ENCODE measurements at regions of chr3 and their contacts with region 1.

Region 1: DNA sequence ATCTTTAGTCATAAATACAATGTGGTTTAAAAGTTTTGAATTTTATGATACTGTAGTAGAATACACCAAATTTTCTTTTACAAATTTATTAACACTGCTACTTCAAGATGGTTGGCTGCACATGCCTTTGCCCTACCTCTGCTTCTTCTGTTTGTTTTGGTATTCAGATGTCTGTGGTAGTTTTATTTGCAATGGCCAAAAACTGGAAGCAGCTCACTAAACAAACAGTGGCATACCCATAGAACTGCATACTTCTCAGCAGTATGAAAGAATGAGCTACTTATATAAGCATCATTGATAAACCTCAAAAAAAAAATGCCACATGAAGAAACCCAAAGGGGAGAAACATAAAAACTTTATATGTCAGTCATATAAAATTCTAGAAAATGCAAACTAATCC is 19.5 kb downstream of the ARIH2 start:
- DNase-seq: no peak
- H3K4me3 Mint-ChIP-seq: no peak overlapping the region
- H3K27ac Mint-ChIP-seq: no peak overlapping the region
- H3K4me1 Mint-ChIP-seq: peaks cover 4% of the 10 kb centered on the region
- H3K27me3 Mint-ChIP-seq: no peaks in the 10 kb centered on the region
- CTCF ChIP-seq: no peak

Region 2: GRCh38 chr3:48528754-48529153 is 409.4 kb before region 1 on chr3:
- CTCF ChIA-PET with region 1: no interaction called
- POLR2A ChIA-PET with region 1: no interaction called
- intact Hi-C with region 1: no loop called
- DNase-seq: peak; percentile 6
- H3K4me3 Mint-ChIP-seq: no peak overlapping the region
- H3K27ac Mint-ChIP-seq: no peak overlapping the region
- H3K4me1 Mint-ChIP-seq: peaks cover 5% of the 10 kb centered on the region
- H3K27me3 Mint-ChIP-seq: no peaks in the 10 kb centered on the region
- CTCF ChIP-seq: no peak

Region 3: GRCh38 chr3:48949376-48949717 is 11.2 kb after region 1 on chr3:
- CTCF ChIA-PET with region 1: interaction called, 4 read pairs
- POLR2A ChIA-PET with region 1: interaction called, 10 read pairs
- intact Hi-C with region 1: no loop called
- DNase-seq: no peak
- H3K4me3 Mint-ChIP-seq: no peak overlapping the region
- H3K27ac Mint-ChIP-seq: peak overlapping the region; percentile 25
- H3K4me1 Mint-ChIP-seq: peaks cover 10% of the 10 kb centered on the region
- H3K27me3 Mint-ChIP-seq: no peaks in the 10 kb centered on the region
- CTCF ChIP-seq: no peak

Region 4: DNA sequence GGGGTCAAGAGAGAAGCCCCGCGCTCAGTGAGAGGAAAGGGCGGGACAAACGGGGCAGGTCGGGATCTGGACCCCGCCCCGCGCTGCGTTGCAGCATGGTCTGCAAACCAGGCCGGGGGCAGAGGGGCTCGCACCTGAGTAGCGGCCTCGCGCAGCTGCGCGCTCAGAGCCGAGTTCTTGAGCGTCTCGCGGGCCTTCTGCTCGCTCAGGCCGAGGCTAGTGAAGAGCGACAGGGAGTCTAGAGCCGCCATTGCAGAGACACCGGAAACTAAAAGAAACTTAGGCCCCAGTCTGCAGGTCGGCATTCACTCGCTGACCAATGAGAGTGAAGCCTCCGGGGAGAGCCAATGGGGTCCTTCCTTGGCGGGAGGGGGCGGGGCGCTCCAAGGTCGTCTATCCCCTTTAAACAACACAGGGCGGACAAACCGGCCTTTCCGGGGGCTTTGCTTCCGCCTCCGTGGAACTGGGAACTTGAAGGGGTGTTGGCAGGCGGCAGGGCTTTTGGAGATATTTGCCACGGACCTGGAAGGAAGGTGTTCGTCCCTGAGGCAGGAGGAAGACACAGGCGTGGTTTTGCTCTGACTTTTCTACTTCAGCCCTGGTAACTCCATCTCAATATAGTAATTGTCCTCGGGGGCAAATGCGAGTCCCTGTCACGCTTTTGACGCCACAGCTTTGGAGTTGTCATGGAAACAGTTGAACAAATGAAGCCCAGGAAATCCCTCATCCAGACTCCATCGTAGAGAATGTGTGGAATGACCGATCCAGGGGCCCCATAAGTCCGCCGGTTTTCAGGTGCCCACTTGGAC is 166.5 kb after region 1 on chr3 and contains the start of gene QARS1:
- CTCF ChIA-PET with region 1: no interaction called
- POLR2A ChIA-PET with region 1: no interaction called
- intact Hi-C with region 1: no loop called
- DNase-seq: peak; percentile 93
- H3K4me3 Mint-ChIP-seq: peak within 1 kb of the TSS; percentile 98
- H3K27ac Mint-ChIP-seq: peak within 1 kb of the TSS; percentile 90
- H3K4me1 Mint-ChIP-seq: peaks cover 12% of the 10 kb centered on the region
- H3K27me3 Mint-ChIP-seq: no peaks in the 10 kb centered on the region
- CTCF ChIP-seq: no peak
- total RNA-seq, gene QARS1: 114 and 149 TPM in 2 replicates

Region 5: GRCh38 chr3:49255112-49255511 is 317.0 kb after region 1 on chr3:
- CTCF ChIA-PET with region 1: no interaction called
- POLR2A ChIA-PET with region 1: no interaction called
- intact Hi-C with region 1: no loop called
- DNase-seq: no peak
- H3K4me3 Mint-ChIP-seq: no peak overlapping the region
- H3K27ac Mint-ChIP-seq: peak overlapping the region; percentile 35
- H3K4me1 Mint-ChIP-seq: no peaks in the 10 kb centered on the region
- H3K27me3 Mint-ChIP-seq: no peaks in the 10 kb centered on the region
- CTCF ChIP-seq: no peak

Measured in MCF 10A (cell line).